H1 (cell line): ENCODE measurements at regions of chr1 and their contacts with region 1.

Region 1: DNA sequence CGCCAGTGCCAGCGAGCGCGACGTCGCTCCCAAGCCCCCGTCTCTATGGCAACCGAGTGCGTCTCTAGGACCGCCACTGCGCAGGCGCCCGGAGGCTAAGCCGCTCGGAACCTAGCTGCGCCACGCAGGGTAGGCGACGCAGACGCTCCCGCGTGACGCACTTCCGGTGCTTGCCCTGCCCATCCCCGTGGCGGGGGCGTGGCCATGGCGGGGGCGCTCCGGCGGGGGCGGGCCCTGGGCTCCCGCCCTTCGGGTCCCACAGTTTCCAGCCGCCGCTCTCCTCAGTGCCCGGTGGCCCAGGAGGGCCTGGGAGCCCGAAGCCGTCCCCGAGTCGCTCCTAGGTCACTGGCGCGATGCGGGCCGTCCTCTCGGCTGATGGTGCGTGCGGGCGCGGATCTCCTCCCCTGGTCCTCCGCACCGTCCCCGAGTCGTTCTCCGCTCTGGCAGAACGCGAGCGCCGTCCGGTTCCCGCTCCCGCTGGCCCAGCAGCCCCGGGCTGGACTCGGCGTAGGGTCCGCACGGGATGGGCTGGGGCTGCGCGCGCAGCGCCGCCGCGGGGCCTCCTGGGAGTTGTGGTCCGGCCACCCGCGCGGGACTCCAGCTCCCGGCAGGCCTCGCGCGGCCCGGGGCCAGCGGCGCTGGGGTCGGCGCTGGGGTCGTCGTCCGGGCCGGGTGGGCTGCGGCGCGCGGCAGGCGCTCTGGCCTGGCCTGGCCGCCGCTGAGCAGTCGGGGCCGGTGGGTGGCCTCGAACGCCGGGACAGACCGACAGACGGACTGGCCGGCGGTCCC is at the start of gene MIB2:
- DNase-seq: peak; percentile 95 to 97
- H3K4me3 ChIP-seq: peak within 1 kb of the TSS; percentile 80 to 97 (median 92)
- H3K27ac ChIP-seq: peak within 1 kb of the TSS; percentile 100
- H3K4me1 ChIP-seq: peaks cover 0 to 13% (median 5%) of the 10 kb centered on the region in 4 experiments; a peak in 5 of 7 replicates
- H3K27me3 ChIP-seq: no peaks in the 10 kb centered on the region; a peak in 1 of 7 replicates
- CTCF ChIP-seq: no peak
- EP300 ChIP-seq: no peak
- POLR2A ChIP-seq: peak in 1 of 2 experiments; percentile 92; a peak in 2 of 3 replicates
- RAD21 ChIP-seq: no peak
- total RNA-seq, gene MIB2: 56.5 and 60.0 TPM in 2 replicates

Region 2: GRCh38 chr1:1185101-1185765 is 430.2 kb before region 1 on chr1:
- CTCF ChIA-PET with region 1: no interaction called
- POLR2A ChIA-PET with region 1: no interaction called
- DNase-seq: peak in 1 of 2 experiments; percentile 44
- H3K4me3 ChIP-seq: no peak overlapping the region
- H3K27ac ChIP-seq: no peak overlapping the region
- H3K4me1 ChIP-seq: no peaks in the 10 kb centered on the region; a peak in 1 of 7 replicates
- H3K27me3 ChIP-seq: no peaks in the 10 kb centered on the region
- CTCF ChIP-seq: no peak
- EP300 ChIP-seq: no peak
- POLR2A ChIP-seq: no peak
- RAD21 ChIP-seq: no peak

Region 3: DNA sequence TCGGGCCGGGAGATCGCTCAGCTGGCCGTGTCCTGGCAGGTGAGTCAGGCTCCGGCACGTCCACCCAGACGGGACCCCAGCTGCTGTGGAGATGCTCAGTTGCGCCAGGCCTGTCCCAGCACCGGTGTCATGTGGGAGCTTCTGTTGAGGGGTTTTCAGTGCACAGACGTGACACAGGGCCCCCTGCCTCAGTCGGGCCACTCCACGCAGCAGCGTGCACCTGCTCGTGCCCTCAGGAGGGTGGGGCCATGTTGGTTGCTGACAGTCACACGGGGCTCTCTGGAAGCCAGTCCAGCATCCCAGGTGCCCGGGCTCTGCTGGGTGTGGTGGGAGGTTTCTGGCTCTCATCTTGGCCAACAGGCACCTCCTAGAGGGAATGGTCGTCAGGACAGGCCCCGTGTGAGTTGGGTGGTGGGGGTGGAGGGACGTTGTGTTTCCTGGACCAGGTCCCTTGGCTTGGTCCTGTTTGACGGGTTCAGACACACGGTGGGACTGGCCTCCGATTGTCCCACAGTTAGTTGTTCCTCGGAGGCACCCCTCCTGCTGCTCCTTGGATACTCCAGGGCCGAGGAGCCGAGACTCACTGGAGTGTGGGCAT is 124.7 kb before region 1 on chr1:
- CTCF ChIA-PET with region 1: no interaction called
- POLR2A ChIA-PET with region 1: no interaction called
- DNase-seq: no peak
- H3K4me3 ChIP-seq: no peak overlapping the region
- H3K27ac ChIP-seq: no peak overlapping the region
- H3K4me1 ChIP-seq: no peaks in the 10 kb centered on the region
- H3K27me3 ChIP-seq: no peaks in the 10 kb centered on the region
- CTCF ChIP-seq: no peak
- EP300 ChIP-seq: no peak
- POLR2A ChIP-seq: no peak
- RAD21 ChIP-seq: no peak

Region 4: GRCh38 chr1:1574721-1575537 is 40.5 kb before region 1 on chr1 and contains the start of gene SSU72:
- CTCF ChIA-PET with region 1: interaction called, 14 read pairs
- POLR2A ChIA-PET with region 1: interaction called, 10 read pairs
- DNase-seq: peak; percentile 70 to 98
- H3K4me3 ChIP-seq: peak within 1 kb of the TSS; percentile 84 to 99 (median 94)
- H3K27ac ChIP-seq: peak within 1 kb of the TSS; percentile 99
- H3K4me1 ChIP-seq: peaks cover 0 to 2% (median 0%) of the 10 kb centered on the region in 4 experiments; a peak in 2 of 7 replicates
- H3K27me3 ChIP-seq: no peaks in the 10 kb centered on the region
- CTCF ChIP-seq: peak in 1 of 3 experiments; percentile 3; a peak in 1 of 4 replicates
- EP300 ChIP-seq: 0 out of 3 replicates have a peak, but pooled peaks of 1 of the 2 experiments have one; percentile 39
- POLR2A ChIP-seq: peak; percentile 93 to 97
- RAD21 ChIP-seq: no peak
- total RNA-seq, gene SSU72: 165 and 170 TPM in 2 replicates

Region 5: DNA sequence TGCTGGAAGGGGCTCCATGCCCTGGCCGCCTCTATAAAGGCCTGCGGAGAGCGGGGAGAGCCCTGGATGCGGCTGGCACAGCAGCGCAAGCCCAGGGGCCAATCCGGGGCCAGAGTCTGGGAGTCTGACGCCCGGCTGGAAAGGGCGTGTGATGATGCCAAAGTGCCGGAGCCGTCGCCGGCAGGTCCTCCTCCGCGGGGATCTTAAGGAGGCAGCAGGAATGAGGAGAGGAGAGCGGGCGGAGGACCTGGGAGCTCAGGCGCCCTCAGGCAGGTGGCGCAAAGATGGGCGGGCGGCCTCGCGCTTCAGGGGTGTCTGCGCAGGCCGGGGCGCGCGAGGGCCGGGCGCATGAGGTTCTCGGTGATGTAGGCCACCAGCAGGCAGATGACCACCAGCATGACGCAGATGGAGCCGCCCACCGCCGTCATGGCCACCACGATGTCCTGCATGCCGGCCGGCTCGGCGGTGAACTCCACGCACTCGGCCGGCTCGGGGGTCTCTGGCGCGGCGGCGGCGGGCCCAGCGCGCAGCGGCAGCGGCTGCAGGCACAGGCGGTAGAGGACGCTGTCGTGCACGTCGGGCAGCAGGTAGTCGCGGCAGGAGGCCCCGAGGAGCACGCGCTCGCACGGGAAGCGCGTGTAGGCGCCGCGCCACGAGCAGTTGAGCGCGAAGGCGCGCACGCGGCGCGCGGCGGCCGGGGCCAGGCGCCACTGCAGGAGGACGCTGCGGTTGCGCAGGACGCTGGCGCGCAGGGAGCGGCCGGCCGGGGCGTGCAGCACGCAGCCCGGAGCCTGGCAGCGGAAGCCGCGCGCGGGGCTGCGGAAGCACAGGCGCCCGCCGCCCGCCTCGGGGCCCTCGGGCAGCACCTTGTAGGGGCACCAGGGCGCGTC is 16.2 kb before region 1 on chr1:
- CTCF ChIA-PET with region 1: interaction called, 12 read pairs
- POLR2A ChIA-PET with region 1: interaction called, 14 read pairs
- DNase-seq: peak in 1 of 2 experiments; percentile 82
- H3K4me3 ChIP-seq: peak overlapping the region; percentile 28 to 63 (median 36)
- H3K27ac ChIP-seq: no peak overlapping the region
- H3K4me1 ChIP-seq: peaks cover 0 to 24% (median 18%) of the 10 kb centered on the region in 4 experiments; a peak in 6 of 7 replicates
- H3K27me3 ChIP-seq: peaks cover 13 to 41% (median 34%) of the 10 kb centered on the region in 4 experiments
- CTCF ChIP-seq: peak in 2 of 3 experiments; percentile 55 to 65; a peak in 3 of 4 replicates
- EP300 ChIP-seq: no peak
- POLR2A ChIP-seq: no peak
- RAD21 ChIP-seq: no peak; a peak in 2 of 4 replicates

Region 6: GRCh38 chr1:1605034-1605591 is 10.3 kb before region 1 on chr1:
- CTCF ChIA-PET with region 1: interaction called, 8 read pairs
- POLR2A ChIA-PET with region 1: interaction called, 14 read pairs
- DNase-seq: peak in 1 of 2 experiments; percentile 51
- H3K4me3 ChIP-seq: no peak overlapping the region
- H3K27ac ChIP-seq: no peak overlapping the region
- H3K4me1 ChIP-seq: peaks cover 0 to 4% (median 2%) of the 10 kb centered on the region in 4 experiments; a peak in 4 of 7 replicates
- H3K27me3 ChIP-seq: peaks cover 7 to 20% (median 16%) of the 10 kb centered on the region in 4 experiments
- CTCF ChIP-seq: no peak
- EP300 ChIP-seq: no peak
- POLR2A ChIP-seq: no peak
- RAD21 ChIP-seq: no peak

Region 7: GRCh38 chr1:1630271-1630964 is 15.0 kb after region 1 on chr1:
- CTCF ChIA-PET with region 1: interaction called, 21 read pairs
- POLR2A ChIA-PET with region 1: interaction called, 34 read pairs
- DNase-seq: peak; percentile 67 to 89
- H3K4me3 ChIP-seq: peak overlapping the region in 2 of 4 experiments; percentile 14 to 70; a peak in 3 of 8 replicates
- H3K27ac ChIP-seq: no peak overlapping the region
- H3K4me1 ChIP-seq: peaks cover 0 to 6% (median 2%) of the 10 kb centered on the region in 4 experiments; a peak in 4 of 7 replicates
- H3K27me3 ChIP-seq: peaks cover 8 to 23% (median 14%) of the 10 kb centered on the region in 4 experiments; a peak in 6 of 7 replicates
- CTCF ChIP-seq: no peak
- EP300 ChIP-seq: no peak
- POLR2A ChIP-seq: no peak
- RAD21 ChIP-seq: no peak

Region 8: GRCh38 chr1:1687846-1688245 is 72.4 kb after region 1 on chr1:
- CTCF ChIA-PET with region 1: no interaction called
- POLR2A ChIA-PET with region 1: no interaction called
- DNase-seq: no peak
- H3K4me3 ChIP-seq: no peak overlapping the region
- H3K27ac ChIP-seq: no peak overlapping the region
- H3K4me1 ChIP-seq: peaks cover 0 to 11% (median 9%) of the 10 kb centered on the region in 4 experiments; a peak in 6 of 7 replicates
- H3K27me3 ChIP-seq: no peaks in the 10 kb centered on the region
- CTCF ChIP-seq: no peak
- EP300 ChIP-seq: no peak
- POLR2A ChIP-seq: no peak
- RAD21 ChIP-seq: no peak

Region 9: GRCh38 chr1:1703796-1704195 is 88.3 kb after region 1 on chr1:
- CTCF ChIA-PET with region 1: no interaction called
- POLR2A ChIA-PET with region 1: no interaction called
- DNase-seq: no peak
- H3K4me3 ChIP-seq: no peak overlapping the region
- H3K27ac ChIP-seq: no peak overlapping the region
- H3K4me1 ChIP-seq: no peaks in the 10 kb centered on the region
- H3K27me3 ChIP-seq: no peaks in the 10 kb centered on the region
- CTCF ChIP-seq: no peak
- EP300 ChIP-seq: no peak
- POLR2A ChIP-seq: no peak
- RAD21 ChIP-seq: no peak